PC-9 (cell line): ENCODE measurements at regions of chr6 and their contacts with region 1.

Region 1: GRCh38 chr6:144165784-144166183 is 15.5 kb downstream of the STX11 start:
- DNase-seq: no peak
- H3K4me3 ChIP-seq: no peak overlapping the region
- H3K27ac ChIP-seq: no peak overlapping the region
- H3K4me1 ChIP-seq: no peaks in the 10 kb centered on the region
- H3K27me3 ChIP-seq: no peaks in the 10 kb centered on the region
- CTCF ChIP-seq: no peak

Region 2: GRCh38 chr6:143842902-143843676 is 322.7 kb before region 1 on chr6 and contains the start of gene LTV1:
- CTCF ChIA-PET with region 1: no interaction called
- POLR2A ChIA-PET with region 1: no interaction called
- intact Hi-C with region 1: no loop called
- DNase-seq: peak; percentile 87 to 92
- H3K4me3 ChIP-seq: peak within 1 kb of the TSS; percentile 94
- H3K27ac ChIP-seq: peak within 1 kb of the TSS; percentile 72
- H3K4me1 ChIP-seq: peaks cover 17% of the 10 kb centered on the region; the same call in 1 of the 2 replicates
- H3K27me3 ChIP-seq: no peaks in the 10 kb centered on the region
- CTCF ChIP-seq: no peak
- total RNA-seq, gene LTV1: 15.4 and 18.3 TPM in 2 replicates

Region 3: DNA sequence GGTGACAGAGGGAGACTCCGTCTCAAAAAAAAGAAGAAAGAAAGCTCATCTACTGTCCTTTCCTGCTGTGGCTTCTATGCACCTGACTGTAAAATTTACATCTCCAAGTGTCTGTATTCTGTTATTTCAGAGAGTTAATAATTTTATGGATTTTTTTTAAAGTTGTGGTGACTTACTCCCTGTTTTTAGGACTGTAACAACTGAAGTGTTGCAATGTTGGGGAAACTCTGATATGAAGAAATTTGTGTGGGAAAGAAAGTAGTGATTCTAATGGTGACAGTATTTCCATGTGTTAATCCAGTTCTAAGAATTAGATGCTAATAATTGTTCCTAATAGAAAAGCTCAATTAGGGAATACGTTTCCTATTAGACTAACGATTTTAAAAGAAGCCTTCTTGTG is 11.9 kb after region 1 on chr6:
- CTCF ChIA-PET with region 1: no interaction called
- POLR2A ChIA-PET with region 1: interaction called, 10 read pairs
- intact Hi-C with region 1: no loop called
- DNase-seq: no peak
- H3K4me3 ChIP-seq: no peak overlapping the region
- H3K27ac ChIP-seq: no peak overlapping the region
- H3K4me1 ChIP-seq: no peaks in the 10 kb centered on the region
- H3K27me3 ChIP-seq: no peaks in the 10 kb centered on the region
- CTCF ChIP-seq: no peak

Region 4: DNA sequence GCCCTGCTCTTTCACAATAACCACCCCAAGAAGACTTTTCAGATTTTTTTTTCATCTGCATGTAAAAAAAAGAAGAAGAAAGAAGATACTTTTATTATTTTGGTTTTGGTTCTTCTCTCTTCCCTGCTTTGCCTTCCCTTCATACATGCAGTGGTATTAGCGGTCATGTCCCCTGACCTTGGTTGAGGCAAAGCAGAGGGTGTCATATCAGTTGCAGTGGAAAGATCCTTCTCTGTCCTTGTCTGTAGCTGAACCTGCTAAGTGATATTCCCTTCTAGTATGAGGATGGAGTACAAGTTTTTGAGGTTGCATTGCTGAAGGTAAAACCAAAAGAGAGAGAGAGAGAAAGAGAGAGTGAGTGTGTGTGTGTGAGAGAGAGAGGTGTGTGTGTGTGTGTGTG is 465.1 kb after region 1 on chr6:
- CTCF ChIA-PET with region 1: no interaction called
- POLR2A ChIA-PET with region 1: no interaction called
- intact Hi-C with region 1: no loop called
- DNase-seq: no peak
- H3K4me3 ChIP-seq: no peak overlapping the region
- H3K27ac ChIP-seq: no peak overlapping the region
- H3K4me1 ChIP-seq: no peaks in the 10 kb centered on the region
- H3K27me3 ChIP-seq: no peaks in the 10 kb centered on the region
- CTCF ChIP-seq: no peak